Adrenal gland (tissue), 19 donors: ENCODE measurements at regions of chr7 and their contacts with region 1.

Region 1: DNA sequence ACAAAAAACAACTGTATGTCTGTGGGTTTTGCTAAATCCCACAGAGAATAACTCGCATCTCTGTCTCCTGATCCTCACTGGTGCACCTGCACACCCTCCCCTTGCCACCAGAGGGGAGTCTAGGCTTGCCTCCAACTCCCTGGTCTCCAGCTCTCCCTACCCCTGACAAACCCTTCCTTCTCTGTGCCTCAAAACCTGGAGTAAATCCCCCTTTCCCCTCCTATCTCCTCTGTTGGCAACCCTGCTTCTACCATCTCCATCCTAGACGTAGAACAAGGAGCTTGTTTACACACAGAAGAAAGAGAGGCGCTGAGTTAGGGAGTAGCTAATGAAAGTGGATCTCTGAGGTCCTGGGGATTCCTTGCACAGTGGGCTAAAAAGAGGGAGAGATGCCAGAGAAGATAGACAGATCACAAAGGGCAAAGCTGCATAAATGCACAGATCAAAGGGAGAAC is 6.0 kb downstream of the MBLAC1 start:
- DNase-seq: peak; percentile 46 to 80 (median 59)
- H3K4me3 ChIP-seq: no peak overlapping the region
- H3K27ac ChIP-seq: no peak overlapping the region
- H3K4me1 ChIP-seq: peaks cover 6 to 9% of the 10 kb centered on the region in 2 donors
- H3K27me3 ChIP-seq: no peaks in the 10 kb centered on the region
- CTCF ChIP-seq: peak; percentile 45 to 95 (median 82)
- POLR2A ChIP-seq: no peak

Region 2: DNA sequence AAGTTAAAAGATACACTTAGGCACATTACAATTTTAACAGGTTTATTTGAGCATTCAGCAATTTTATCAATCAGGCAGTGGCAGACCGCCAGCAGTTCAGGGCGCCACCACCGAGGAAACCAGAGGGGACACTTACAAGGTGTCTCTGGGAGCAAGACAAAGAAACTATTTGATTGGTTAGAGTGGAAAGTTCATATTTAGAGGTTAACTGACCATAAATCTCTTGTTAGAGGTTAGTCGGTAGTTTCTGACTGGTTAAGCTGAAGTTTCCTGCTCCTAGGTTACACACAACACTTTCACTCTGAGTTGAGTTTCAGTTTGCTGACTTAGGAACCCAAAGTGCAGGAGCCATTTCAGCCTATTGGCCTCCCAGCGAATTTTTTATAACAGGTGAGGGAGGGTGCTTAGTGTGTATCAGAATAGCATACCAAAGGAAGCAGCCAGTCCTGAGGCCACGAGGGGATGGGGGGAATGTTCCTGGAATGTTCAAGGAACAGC is 76.2 kb after region 1 on chr7:
- intact Hi-C with region 1: loop called in 1 of 2 experiments (anchors 5 kb)
- DNase-seq: peak in 1 of 7 donors; percentile 48
- H3K4me3 ChIP-seq: no peak overlapping the region
- H3K27ac ChIP-seq: no peak overlapping the region
- H3K4me1 ChIP-seq: no peaks in the 10 kb centered on the region
- H3K27me3 ChIP-seq: no peaks in the 10 kb centered on the region
- CTCF ChIP-seq: no peak
- POLR2A ChIP-seq: no peak

Region 3: DNA sequence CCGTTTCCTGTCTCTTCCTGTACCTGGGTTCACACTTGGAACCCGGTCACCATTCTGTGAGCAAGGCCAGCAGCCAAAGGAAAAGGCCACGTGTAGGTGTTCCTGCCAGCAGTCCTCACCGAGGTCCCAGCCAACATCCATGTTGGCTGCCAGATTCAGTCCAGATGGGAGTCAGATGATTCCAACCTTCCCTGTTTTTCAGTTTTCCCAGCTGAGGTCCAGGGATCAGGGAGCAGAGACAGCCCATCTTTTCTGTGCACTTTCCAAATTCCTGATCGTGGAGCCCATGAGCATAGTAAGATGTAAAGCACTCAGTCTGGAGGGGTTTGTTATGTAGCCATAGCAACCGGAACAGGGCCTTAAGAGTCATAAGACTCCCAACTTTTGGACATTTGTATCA is 83.2 kb after region 1 on chr7:
- intact Hi-C with region 1: loop called in 1 of 2 experiments (anchors 5 kb)
- DNase-seq: no peak
- H3K4me3 ChIP-seq: no peak overlapping the region
- H3K27ac ChIP-seq: no peak overlapping the region
- H3K4me1 ChIP-seq: peaks cover 0 to 4% of the 10 kb centered on the region in 2 donors
- H3K27me3 ChIP-seq: no peaks in the 10 kb centered on the region
- CTCF ChIP-seq: no peak
- POLR2A ChIP-seq: no peak